Ovary (tissue), 10 donors: ENCODE measurements at regions of chr21 and their contacts with region 1.

Region 1: GRCh38 chr21:39715804-39716397 is 29.1 kb upstream of the IGSF5 start:
- DNase-seq: peak; percentile 20 to 43 (median 28)
- H3K4me3 ChIP-seq: no peak overlapping the region
- H3K27ac ChIP-seq: no peak overlapping the region
- H3K4me1 ChIP-seq: no peaks in the 10 kb centered on the region
- H3K27me3 ChIP-seq: no peaks in the 10 kb centered on the region
- CTCF ChIP-seq: no peak
- EP300 ChIP-seq: no peak
- POLR2A ChIP-seq: no peak

Region 2: GRCh38 chr21:39518138-39518846 is 197.6 kb before region 1 on chr21:
- intact Hi-C with region 1: loop called in 3 of 4 experiments (anchors 5 to 10 kb)
- DNase-seq: no peak
- H3K4me3 ChIP-seq: no peak overlapping the region
- H3K27ac ChIP-seq: no peak overlapping the region
- H3K4me1 ChIP-seq: no peaks in the 10 kb centered on the region
- H3K27me3 ChIP-seq: no peaks in the 10 kb centered on the region
- CTCF ChIP-seq: peak in 2 of 3 donors; percentile 28 to 68
- EP300 ChIP-seq: no peak
- POLR2A ChIP-seq: no peak

Region 3: DNA sequence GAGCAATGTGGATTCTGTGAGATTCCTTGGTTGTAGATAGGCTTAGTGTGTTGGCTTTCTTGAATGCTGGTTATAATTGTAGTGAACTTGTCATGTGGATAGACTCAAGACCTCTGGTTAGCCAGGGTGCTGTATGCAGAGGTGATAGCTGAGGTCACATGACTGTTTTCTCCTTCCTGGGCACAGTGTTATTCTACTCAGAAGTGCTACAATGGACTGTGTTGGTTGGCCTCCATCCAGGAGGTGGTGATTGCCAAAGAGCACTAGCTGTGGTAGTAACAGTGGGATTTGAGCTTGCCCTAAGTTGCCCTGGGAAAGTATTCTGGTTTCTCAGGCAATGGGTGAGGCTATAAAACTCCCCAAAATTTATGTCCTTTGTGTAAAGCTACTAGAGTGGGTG is 192.5 kb before region 1 on chr21:
- intact Hi-C with region 1: loop called in 3 of 4 experiments (anchors 5 to 10 kb)
- DNase-seq: no peak
- H3K4me3 ChIP-seq: no peak overlapping the region
- H3K27ac ChIP-seq: no peak overlapping the region
- H3K4me1 ChIP-seq: peaks cover 2% of the 10 kb centered on the region
- H3K27me3 ChIP-seq: no peaks in the 10 kb centered on the region
- CTCF ChIP-seq: no peak
- EP300 ChIP-seq: no peak
- POLR2A ChIP-seq: no peak